GM12878 (cell line): ENCODE measurements at regions of chr2 and their contacts with region 1.

Region 1: GRCh38 chr2:31886697-31887096 is 124.1 kb downstream of the MEMO1 start:
- DNase-seq: no peak
- ATAC-seq: peak; percentile 89
- H3K4me3 ChIP-seq: no peak overlapping the region
- H3K27ac ChIP-seq: no peak overlapping the region
- H3K4me1 ChIP-seq: peaks cover 12% of the 10 kb centered on the region
- H3K27me3 ChIP-seq: no peaks in the 10 kb centered on the region
- CTCF ChIP-seq: peak; percentile 50 to 54 (median 54); a peak in 5 of 6 replicates
- EP300 ChIP-seq: no peak
- POLR2A ChIP-seq: no peak
- RAD21 ChIP-seq: peak; percentile 67

Region 2: DNA sequence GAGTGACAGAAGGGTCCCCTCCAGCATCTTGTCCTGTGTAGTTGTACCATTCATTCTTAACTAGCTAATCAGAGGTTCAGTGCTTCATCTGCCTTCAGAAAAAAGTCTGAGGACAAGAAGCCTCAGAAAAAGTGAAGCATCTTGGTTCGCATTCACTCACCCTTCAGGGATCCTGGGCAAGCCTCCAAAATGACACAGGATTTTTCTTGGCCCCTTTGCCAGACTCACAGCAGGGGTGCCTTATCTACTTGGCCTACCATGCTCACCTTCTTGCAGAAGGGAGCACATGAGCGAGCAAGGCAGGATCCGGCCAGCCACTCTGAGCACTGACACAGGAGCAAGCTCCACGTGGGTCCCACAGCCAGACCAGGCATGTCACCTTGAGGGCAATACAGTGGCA is 429.0 kb before region 1 on chr2:
- CTCF ChIA-PET with region 1: no interaction called
- POLR2A ChIA-PET with region 1: no interaction called
- RAD21 ChIA-PET with region 1: no interaction called
- SMC1A ChIA-PET with region 1: no interaction called
- in situ Hi-C with region 1: no loop called
- intact Hi-C with region 1: no loop called
- DNase-seq: no peak
- ATAC-seq: no peak
- H3K4me3 ChIP-seq: no peak overlapping the region
- H3K27ac ChIP-seq: no peak overlapping the region
- H3K4me1 ChIP-seq: no peaks in the 10 kb centered on the region
- H3K27me3 ChIP-seq: no peaks in the 10 kb centered on the region
- CTCF ChIP-seq: no peak
- EP300 ChIP-seq: no peak
- POLR2A ChIP-seq: no peak
- RAD21 ChIP-seq: no peak

Region 3: DNA sequence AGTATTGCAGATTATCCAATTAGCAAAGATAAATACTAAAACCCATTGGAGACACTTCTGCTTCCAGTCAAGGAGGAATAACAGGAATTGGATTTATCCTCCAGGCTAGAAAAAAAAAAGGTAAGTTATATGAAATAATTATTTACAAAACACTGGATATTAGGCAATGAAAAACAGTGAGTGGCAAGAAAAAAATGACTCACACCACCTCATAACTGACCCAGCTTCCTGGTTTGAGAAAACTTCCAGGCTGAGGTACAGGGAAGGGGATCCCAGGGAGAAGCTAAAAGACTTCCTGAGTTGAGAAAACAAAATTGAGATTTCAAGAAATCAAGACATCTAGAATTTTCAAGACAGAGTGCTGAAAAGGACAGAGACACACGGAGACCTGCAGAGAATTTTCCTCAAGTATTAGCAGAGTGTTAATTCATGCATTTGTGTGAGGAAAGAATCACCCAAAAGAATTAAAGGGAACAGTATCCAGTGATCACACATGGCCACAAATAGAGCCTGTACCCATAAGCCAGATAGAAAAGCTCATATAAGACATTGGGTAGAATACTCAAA is 323.3 kb before region 1 on chr2:
- CTCF ChIA-PET with region 1: no interaction called
- POLR2A ChIA-PET with region 1: no interaction called
- RAD21 ChIA-PET with region 1: no interaction called
- SMC1A ChIA-PET with region 1: no interaction called
- in situ Hi-C with region 1: no loop called
- intact Hi-C with region 1: no loop called
- DNase-seq: no peak
- ATAC-seq: no peak
- H3K4me3 ChIP-seq: no peak overlapping the region
- H3K27ac ChIP-seq: no peak overlapping the region
- H3K4me1 ChIP-seq: no peaks in the 10 kb centered on the region
- H3K27me3 ChIP-seq: no peaks in the 10 kb centered on the region
- CTCF ChIP-seq: no peak
- EP300 ChIP-seq: no peak
- POLR2A ChIP-seq: no peak
- RAD21 ChIP-seq: no peak

Region 4: GRCh38 chr2:31853521-31853920 is 33.2 kb before region 1 on chr2:
- CTCF ChIA-PET with region 1: no interaction called
- POLR2A ChIA-PET with region 1: no interaction called
- RAD21 ChIA-PET with region 1: no interaction called
- SMC1A ChIA-PET with region 1: no interaction called
- in situ Hi-C with region 1: no loop called
- intact Hi-C with region 1: no loop called
- DNase-seq: no peak
- ATAC-seq: no peak
- H3K4me3 ChIP-seq: no peak overlapping the region
- H3K27ac ChIP-seq: no peak overlapping the region
- H3K4me1 ChIP-seq: no peaks in the 10 kb centered on the region
- H3K27me3 ChIP-seq: no peaks in the 10 kb centered on the region
- CTCF ChIP-seq: no peak
- EP300 ChIP-seq: no peak
- POLR2A ChIP-seq: no peak
- RAD21 ChIP-seq: no peak

Region 5: DNA sequence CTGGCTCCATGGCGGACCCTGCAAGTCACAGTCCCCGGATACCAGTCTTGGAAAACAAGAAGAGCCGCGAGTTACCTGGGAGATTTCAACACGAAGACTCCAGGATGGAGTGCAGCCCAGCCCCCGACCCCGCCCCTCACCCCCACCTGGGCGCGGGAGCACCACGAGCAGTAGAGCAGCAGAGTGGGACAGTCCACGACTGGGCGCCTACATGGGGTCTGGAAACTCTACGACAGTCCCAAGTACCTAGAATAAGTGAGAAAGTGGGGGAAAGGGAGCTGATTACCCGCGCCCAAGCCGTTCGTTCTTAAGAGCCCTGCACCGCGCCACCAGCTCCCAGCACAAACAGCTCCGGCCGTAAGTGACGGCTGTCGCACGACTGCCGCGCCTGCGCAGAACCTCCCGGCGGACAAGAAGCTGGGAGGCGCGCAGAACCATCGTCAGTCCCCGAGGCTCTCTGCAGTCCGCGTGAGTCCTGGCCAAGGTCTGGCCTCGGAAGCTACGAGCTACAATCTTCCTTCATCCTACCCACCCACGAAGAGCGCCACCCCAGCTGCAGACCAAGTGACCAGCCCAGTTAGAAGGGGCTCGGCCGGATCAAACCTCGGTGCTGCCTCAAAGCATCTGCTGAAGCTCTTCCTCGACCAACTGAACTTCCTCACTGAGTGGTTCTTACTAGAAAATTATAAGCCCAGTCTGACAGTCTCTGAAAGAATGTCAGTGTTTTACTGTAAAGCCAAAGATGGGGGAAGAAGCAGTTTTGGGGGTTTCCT is 152.9 kb after region 1 on chr2 and contains the start of gene DPY30:
- CTCF ChIA-PET with region 1: interaction called, 14 read pairs
- POLR2A ChIA-PET with region 1: interaction called, 4 read pairs
- RAD21 ChIA-PET with region 1: interaction called, 5 read pairs
- SMC1A ChIA-PET with region 1: interaction called, 6 read pairs
- in situ Hi-C with region 1: no loop called
- intact Hi-C with region 1: no loop called
- DNase-seq: peak; percentile 62
- ATAC-seq: peak; percentile 98
- H3K4me3 ChIP-seq: peak within 1 kb of the TSS; percentile 97
- H3K27ac ChIP-seq: peak within 1 kb of the TSS; percentile 67
- H3K4me1 ChIP-seq: no peaks in the 10 kb centered on the region
- H3K27me3 ChIP-seq: no peaks in the 10 kb centered on the region
- CTCF ChIP-seq: no peak
- EP300 ChIP-seq: no peak
- POLR2A ChIP-seq: peak; percentile 100
- RAD21 ChIP-seq: no peak
- polyA plus RNA-seq, gene DPY30: 287 to 307 TPM

Region 6: DNA sequence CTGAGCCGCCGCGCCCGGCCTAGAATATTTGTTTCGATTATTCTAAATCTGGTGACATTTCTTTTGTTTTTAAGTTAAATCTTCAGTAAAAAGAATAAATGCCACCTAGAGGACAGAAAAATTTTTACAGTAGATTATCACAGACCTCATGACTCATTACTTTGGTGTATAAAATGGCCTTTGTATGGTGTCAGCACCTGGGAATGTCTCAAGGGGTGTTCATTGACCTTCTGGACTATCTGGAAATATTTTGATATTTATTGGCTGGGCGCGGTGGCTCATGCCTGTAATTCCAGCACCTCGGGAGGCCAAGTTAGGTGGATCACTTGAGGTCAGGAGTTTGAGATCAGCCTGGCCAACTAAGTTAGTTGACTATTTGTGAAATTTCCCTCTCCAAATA is 248.7 kb after region 1 on chr2:
- CTCF ChIA-PET with region 1: no interaction called
- POLR2A ChIA-PET with region 1: no interaction called
- RAD21 ChIA-PET with region 1: no interaction called
- SMC1A ChIA-PET with region 1: no interaction called
- in situ Hi-C with region 1: no loop called
- intact Hi-C with region 1: loop called (anchors 10 kb)
- DNase-seq: no peak
- ATAC-seq: peak; percentile 78
- H3K4me3 ChIP-seq: no peak overlapping the region
- H3K27ac ChIP-seq: no peak overlapping the region
- H3K4me1 ChIP-seq: no peaks in the 10 kb centered on the region
- H3K27me3 ChIP-seq: no peaks in the 10 kb centered on the region
- CTCF ChIP-seq: no peak; a peak in 1 of 6 replicates
- EP300 ChIP-seq: no peak
- POLR2A ChIP-seq: no peak
- RAD21 ChIP-seq: no peak